A673 (cell line): ENCODE measurements at regions of chr2 and their contacts with region 1.

Region 1: GRCh38 chr2:171303749-171304148 is 130.0 kb downstream of the METTL8 start:
- DNase-seq: no peak
- H3K4me3 ChIP-seq: no peak overlapping the region
- H3K27ac ChIP-seq: no peak overlapping the region
- H3K4me1 ChIP-seq: no peaks in the 10 kb centered on the region
- H3K27me3 ChIP-seq: no peaks in the 10 kb centered on the region
- CTCF ChIP-seq: no peak

Region 2: GRCh38 chr2:171325886-171326585 is 22.3 kb after region 1 on chr2:
- CTCF ChIA-PET with region 1: no interaction called
- POLR2A ChIA-PET with region 1: interaction called, 13 read pairs
- intact Hi-C with region 1: no loop called
- DNase-seq: no peak
- H3K4me3 ChIP-seq: no peak overlapping the region
- H3K27ac ChIP-seq: no peak overlapping the region
- H3K4me1 ChIP-seq: peaks cover 15% of the 10 kb centered on the region
- H3K27me3 ChIP-seq: no peaks in the 10 kb centered on the region
- CTCF ChIP-seq: no peak